ENCODE measurements at regions of chr10 and their contacts with region 1.

Region 1: DNA sequence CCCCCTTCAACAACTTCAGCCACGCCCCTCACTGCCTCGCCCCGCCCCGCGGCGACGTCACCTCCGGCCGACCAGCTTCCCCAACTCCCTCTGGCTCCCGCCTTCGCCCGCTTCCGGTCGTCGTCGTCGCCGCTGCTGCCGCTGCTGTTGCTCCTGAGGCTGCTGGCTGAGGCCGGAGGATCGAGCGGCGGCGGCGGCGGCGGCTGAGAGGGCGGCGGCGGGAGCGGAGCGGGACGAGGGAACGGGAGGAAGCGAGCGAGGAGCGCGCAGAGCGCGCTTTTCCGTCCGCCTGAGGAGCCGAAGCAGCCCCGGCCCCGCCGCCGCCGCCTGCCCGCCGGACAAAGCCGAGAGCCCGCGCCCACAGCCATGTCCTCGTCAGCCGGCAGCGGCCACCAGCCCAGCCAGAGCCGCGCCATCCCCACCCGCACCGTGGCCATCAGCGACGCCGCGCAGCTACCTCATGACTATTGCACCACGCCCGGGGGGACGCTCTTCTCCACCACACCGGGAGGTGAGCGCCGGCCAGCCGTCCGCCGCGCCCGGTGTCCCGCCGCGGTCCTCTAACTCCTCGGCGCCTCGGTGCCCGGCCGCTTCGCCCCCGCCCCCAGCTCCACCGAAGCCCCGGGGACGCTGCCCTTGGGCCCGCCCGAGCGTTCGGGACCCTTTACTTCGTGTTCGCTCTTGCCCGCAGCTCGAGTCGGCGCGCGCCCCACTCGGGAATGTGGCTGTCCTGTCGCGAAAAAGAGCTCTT is at the start of gene EIF4EBP2:
- DNase-seq: peak; percentile 97 to 99 (median 98)
- H3K4me3 ChIP-seq: peak within 1 kb of the TSS; percentile 62 to 96 (median 88)
- H3K27ac ChIP-seq: peak within 1 kb of the TSS; percentile 37 to 97 (median 89)
- H3K27me3 ChIP-seq: no peaks in the 10 kb centered on the region
- CTCF ChIP-seq: peak in 17 of 56 donors; percentile 5 to 53 (median 20)
- total RNA-seq, gene EIF4EBP2: 28.6 to 91.0 (median 50.9) TPM

Region 2: GRCh38 chr10:70169649-70170364 is 234.4 kb before region 1 on chr10:
- intact Hi-C with region 1: loop called in 1 of 2 experiments (anchors 2 kb)
- DNase-seq: peak in 2 of 10 donors; percentile 40 to 50
- H3K4me3 ChIP-seq: peak overlapping the region; percentile 68 to 98 (median 93)
- H3K27ac ChIP-seq: peak overlapping the region in 58 of 59 donors; percentile 51 to 96 (median 87)
- H3K27me3 ChIP-seq: no peaks in the 10 kb centered on the region
- CTCF ChIP-seq: no peak

Region 3: DNA sequence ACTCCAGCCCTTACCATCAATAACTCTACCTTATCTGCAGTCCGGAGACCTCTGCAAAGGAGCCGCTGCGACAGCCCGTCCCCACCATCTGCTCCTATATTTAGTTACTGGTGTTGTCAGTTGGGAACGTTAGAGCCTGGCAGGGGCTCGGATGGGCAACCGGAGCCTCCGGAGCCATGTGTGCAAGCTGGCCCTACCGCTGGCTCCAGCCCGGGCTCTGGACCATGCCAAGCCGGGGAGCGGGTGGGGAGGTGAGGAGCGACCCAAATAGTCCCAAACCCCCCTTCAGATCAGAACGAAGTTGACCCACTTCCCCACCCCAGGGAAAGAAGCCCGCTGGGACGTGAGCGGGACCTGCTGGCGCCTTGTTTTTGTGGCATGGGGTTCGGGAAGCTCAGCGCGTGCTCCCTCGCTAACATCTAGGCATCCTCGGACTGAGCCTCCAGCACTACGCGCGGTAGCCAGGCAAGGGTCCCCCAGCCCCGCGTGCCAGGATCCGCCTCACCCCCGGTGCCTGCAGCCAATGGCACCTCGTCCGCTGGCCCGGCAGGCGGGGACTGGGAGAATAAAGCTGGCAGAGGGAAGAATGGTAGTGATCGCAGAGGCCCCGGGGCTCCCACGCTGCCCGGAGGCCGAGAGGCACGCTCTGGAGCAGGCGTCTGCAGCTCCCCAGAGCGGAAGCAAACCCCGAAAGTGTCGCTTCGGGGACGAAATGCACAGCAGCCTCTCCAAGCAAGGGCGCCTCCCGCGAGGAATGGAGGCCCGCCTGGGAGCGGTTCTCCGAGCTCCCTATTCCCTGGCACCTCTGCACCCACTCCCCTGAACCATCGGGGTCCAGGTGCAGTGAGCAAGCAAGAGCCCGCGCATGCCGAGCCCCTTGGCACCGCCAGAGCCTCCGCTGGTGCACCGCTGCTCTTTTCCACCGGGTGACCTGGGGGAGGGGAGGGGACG is 22.5 kb before region 1 on chr10:
- intact Hi-C with region 1: loop called (anchors 1 to 2 kb)
- DNase-seq: peak in 9 of 10 donors; percentile 30 to 75 (median 51)
- H3K4me3 ChIP-seq: peak overlapping the region; percentile 44 to 99 (median 87)
- H3K27ac ChIP-seq: peak overlapping the region in 52 of 59 donors; percentile 2 to 89 (median 73)
- H3K27me3 ChIP-seq: no peaks in the 10 kb centered on the region
- CTCF ChIP-seq: peak in 2 of 56 donors; percentile 2 to 7

Region 4: DNA sequence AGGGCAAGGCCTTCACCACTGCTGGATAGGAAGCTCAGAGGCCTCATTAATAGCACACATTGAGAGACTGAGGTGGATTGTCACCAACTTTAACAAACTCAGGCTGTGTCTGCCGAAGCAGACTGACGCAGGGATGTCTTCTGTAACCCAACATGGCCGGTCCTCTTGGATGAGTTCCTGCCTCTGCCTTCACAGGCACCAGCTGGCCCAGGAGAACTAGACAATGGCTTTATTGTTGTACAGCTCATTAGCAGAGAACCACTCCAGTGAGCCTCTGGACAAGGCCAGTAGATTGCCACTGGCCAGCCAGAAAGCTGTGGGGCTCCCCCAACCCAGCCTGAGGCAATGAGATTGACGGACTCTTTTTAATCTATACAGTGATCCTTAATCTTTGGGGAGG is 27.9 kb after region 1 on chr10:
- intact Hi-C with region 1: loop called in 1 of 2 experiments (anchors 2 kb)
- DNase-seq: peak in 9 of 10 donors; percentile 32 to 80 (median 71)
- H3K4me3 ChIP-seq: peak overlapping the region in 17 of 59 donors; percentile 0 to 41 (median 5)
- H3K27ac ChIP-seq: peak overlapping the region in 47 of 59 donors; percentile 2 to 85 (median 62)
- H3K27me3 ChIP-seq: no peaks in the 10 kb centered on the region
- CTCF ChIP-seq: peak in 13 of 56 donors; percentile 5 to 56 (median 17)

Region 5: DNA sequence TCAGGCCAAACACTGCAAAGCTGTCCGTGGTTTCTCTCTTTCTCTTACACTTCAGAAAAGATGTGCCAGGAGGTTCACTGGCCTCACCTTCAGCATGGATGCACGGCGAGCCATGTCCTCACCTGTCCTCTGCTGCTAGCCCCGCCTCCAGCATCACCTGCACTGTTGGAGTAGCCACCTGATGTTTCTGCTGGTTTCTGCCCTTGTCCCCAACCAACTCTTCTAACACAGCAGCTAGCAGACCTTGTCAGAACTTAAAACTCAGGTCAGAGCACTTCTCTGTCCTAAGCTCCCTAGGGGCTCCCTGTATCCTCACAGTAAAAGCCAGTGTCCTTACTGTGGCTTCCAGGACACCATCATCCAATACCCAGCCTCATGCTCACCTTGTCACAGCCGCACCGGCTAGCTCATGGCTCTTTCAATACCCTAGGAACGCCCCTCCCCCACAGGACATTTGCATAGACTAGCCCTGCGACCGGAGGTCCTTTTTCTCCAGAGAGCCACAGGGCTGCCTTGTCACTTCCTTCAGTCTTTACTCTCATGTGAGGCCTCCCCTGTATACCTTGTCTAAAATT is 89.5 kb after region 1 on chr10:
- intact Hi-C with region 1: no loop called
- DNase-seq: no peak
- H3K4me3 ChIP-seq: peak overlapping the region in 3 of 59 donors; percentile 1 to 22 (median 16)
- H3K27ac ChIP-seq: peak overlapping the region in 41 of 59 donors; percentile 6 to 78 (median 58)
- H3K27me3 ChIP-seq: no peaks in the 10 kb centered on the region
- CTCF ChIP-seq: no peak

Measured in dorsolateral prefrontal cortex (tissue), 120 donors.